Ovary (tissue), 10 donors: ENCODE measurements at regions of chr10 and their contacts with region 1.

Region 1: DNA sequence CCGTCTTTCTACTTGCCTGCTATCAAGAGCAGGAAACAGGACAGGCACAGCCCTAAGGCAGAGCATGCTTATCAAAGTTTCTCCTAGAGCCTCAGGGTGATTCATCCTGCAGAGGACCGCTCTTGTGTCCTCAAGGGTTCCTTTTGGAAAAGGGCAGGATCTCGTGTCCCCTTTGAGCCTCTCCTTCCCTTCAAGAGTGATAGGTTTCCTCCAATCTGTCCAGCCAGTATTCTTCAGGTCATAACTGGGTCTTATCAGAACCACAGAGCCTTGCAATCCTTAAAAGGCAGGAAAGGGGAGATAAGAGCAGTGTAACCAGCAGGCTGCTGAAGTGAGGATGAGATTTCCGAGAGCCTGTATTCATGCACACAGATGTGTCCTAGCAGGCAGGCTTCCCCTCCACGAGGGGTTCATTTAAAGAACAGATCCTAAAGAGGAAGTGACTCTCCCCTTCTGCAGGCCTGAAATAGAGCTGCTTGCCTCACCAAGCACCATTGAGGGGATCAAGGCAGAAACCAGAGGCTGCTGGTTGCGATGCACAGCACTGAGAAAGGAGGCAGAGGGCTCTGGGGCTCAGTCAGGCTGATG is 90.5 kb upstream of the SVIL start:
- DNase-seq: no peak
- H3K4me3 ChIP-seq: no peak overlapping the region
- H3K27ac ChIP-seq: peak overlapping the region in 1 of 2 donors; percentile 34
- H3K4me1 ChIP-seq: peaks cover 25% of the 10 kb centered on the region
- H3K27me3 ChIP-seq: no peaks in the 10 kb centered on the region
- CTCF ChIP-seq: no peak
- EP300 ChIP-seq: no peak
- POLR2A ChIP-seq: no peak

Region 2: GRCh38 chr10:29669149-29669548 is 56.1 kb before region 1 on chr10:
- intact Hi-C with region 1: loop called in 1 of 4 experiments (anchors 10 kb)
- DNase-seq: peak in 1 of 5 donors; percentile 36
- H3K4me3 ChIP-seq: no peak overlapping the region
- H3K27ac ChIP-seq: no peak overlapping the region
- H3K4me1 ChIP-seq: peaks cover 4% of the 10 kb centered on the region
- H3K27me3 ChIP-seq: no peaks in the 10 kb centered on the region
- CTCF ChIP-seq: no peak
- EP300 ChIP-seq: no peak
- POLR2A ChIP-seq: no peak

Region 3: GRCh38 chr10:29791773-29792378 is 66.6 kb after region 1 on chr10:
- intact Hi-C with region 1: no loop called
- DNase-seq: no peak
- H3K4me3 ChIP-seq: no peak overlapping the region
- H3K27ac ChIP-seq: no peak overlapping the region
- H3K4me1 ChIP-seq: peaks cover 2% of the 10 kb centered on the region
- H3K27me3 ChIP-seq: no peaks in the 10 kb centered on the region
- CTCF ChIP-seq: no peak
- EP300 ChIP-seq: no peak
- POLR2A ChIP-seq: no peak

Region 4: DNA sequence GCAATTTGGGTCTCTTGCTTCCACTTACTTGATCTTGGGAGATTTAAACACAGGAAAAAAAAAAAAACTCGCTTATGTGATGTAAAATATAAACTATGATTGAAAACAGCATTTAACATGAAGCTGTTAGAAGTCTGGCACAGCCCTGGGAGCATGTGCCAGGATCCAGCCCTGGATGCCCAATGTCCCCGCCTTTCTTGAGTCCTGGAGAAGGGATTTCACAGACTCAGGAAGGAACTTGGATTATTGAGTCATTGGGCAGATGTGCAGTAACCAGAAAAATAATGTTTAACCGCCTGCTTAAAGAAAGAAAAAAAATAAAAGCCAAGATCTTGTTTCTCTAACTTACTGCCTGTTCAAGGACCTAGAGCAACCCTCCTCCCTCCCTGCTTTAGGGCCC is 337.9 kb after region 1 on chr10:
- intact Hi-C with region 1: no loop called
- DNase-seq: no peak
- H3K4me3 ChIP-seq: no peak overlapping the region
- H3K27ac ChIP-seq: no peak overlapping the region
- H3K4me1 ChIP-seq: peaks cover 7% of the 10 kb centered on the region
- H3K27me3 ChIP-seq: no peaks in the 10 kb centered on the region
- CTCF ChIP-seq: no peak
- EP300 ChIP-seq: no peak
- POLR2A ChIP-seq: no peak